ENCODE measurements at regions of chr2 and their contacts with region 1.

Region 1: GRCh38 chr2:237998530-237998929 is 31.7 kb downstream of the UBE2F start:
- DNase-seq: peak; percentile 25
- H3K4me3 Mint-ChIP-seq: peak overlapping the region; percentile 49
- H3K27ac Mint-ChIP-seq: peak overlapping the region; percentile 95
- H3K4me1 Mint-ChIP-seq: peaks cover 63% of the 10 kb centered on the region
- H3K27me3 Mint-ChIP-seq: no peaks in the 10 kb centered on the region

Region 2: DNA sequence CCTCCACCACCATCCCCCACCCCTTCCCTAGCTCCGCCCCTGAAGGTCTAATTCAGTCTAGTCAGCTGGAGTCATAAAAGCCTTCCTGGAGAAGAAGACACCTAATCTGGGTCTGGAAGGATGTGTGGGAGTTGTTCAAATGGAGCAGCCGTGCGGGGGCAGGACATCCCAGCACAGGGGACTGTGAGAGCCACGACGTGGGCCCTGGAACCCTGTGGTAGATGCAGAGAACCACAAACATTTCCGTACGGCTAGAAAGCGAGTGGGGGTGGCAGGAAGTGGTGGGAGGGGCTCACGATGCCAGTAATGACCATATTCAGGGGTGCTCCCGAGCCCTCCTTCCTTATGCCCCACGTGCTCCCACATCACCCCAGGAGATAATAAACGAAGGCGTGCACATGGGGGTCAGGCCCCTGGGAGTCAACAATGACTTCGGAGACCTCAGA is 563.6 kb before region 1 on chr2:
- intact Hi-C with region 1: loop called (anchors 5 kb)
- DNase-seq: peak; percentile 69
- H3K4me3 Mint-ChIP-seq: peak overlapping the region; percentile 72
- H3K27ac Mint-ChIP-seq: peak overlapping the region; percentile 86
- H3K4me1 Mint-ChIP-seq: peaks cover 81% of the 10 kb centered on the region
- H3K27me3 Mint-ChIP-seq: no peaks in the 10 kb centered on the region

Region 3: GRCh38 chr2:237691908-237692600 is 306.5 kb before region 1 on chr2:
- intact Hi-C with region 1: loop called (anchors 5 kb)
- DNase-seq: peak; percentile 91
- H3K4me3 Mint-ChIP-seq: peak overlapping the region; percentile 99
- H3K27ac Mint-ChIP-seq: peak overlapping the region; percentile 98
- H3K4me1 Mint-ChIP-seq: peaks cover 59% of the 10 kb centered on the region
- H3K27me3 Mint-ChIP-seq: no peaks in the 10 kb centered on the region

Region 4: GRCh38 chr2:237980751-237981150 is 17.8 kb before region 1 on chr2:
- intact Hi-C with region 1: loop called (anchors 1 kb)
- DNase-seq: peak; percentile 25
- H3K4me3 Mint-ChIP-seq: peak overlapping the region; percentile 37
- H3K27ac Mint-ChIP-seq: peak overlapping the region; percentile 94
- H3K4me1 Mint-ChIP-seq: peaks cover 72% of the 10 kb centered on the region
- H3K27me3 Mint-ChIP-seq: no peaks in the 10 kb centered on the region

Region 5: DNA sequence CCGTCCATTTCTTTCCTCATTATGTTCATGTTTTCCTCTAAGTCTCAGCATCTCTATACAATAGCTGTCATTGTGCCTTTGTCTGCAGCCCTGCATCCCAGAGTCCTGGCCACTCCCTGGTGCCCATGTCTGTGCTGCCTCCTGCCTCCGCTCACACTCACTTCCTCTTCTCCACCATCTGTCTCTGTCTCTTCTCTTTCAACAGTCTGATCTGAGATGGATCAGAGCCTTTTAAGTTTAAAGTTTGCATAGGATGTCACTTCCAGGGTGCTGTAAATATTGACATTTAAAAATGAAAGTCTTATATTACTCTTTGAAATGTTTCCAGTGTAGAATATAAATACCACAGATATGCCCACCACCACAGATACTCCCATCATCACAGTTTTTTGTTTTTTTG is 11.0 kb after region 1 on chr2:
- intact Hi-C with region 1: loop called (anchors 1 kb)
- DNase-seq: no peak
- H3K4me3 Mint-ChIP-seq: peak overlapping the region; percentile 78
- H3K27ac Mint-ChIP-seq: peak overlapping the region; percentile 99
- H3K4me1 Mint-ChIP-seq: peaks cover 59% of the 10 kb centered on the region
- H3K27me3 Mint-ChIP-seq: no peaks in the 10 kb centered on the region

Region 6: GRCh38 chr2:238024986-238025385 is 26.5 kb after region 1 on chr2:
- intact Hi-C with region 1: loop called (anchors 2 kb)
- DNase-seq: peak; percentile 33
- H3K4me3 Mint-ChIP-seq: peak overlapping the region; percentile 66
- H3K27ac Mint-ChIP-seq: peak overlapping the region; percentile 86
- H3K4me1 Mint-ChIP-seq: peaks cover 38% of the 10 kb centered on the region
- H3K27me3 Mint-ChIP-seq: no peaks in the 10 kb centered on the region

Region 7: DNA sequence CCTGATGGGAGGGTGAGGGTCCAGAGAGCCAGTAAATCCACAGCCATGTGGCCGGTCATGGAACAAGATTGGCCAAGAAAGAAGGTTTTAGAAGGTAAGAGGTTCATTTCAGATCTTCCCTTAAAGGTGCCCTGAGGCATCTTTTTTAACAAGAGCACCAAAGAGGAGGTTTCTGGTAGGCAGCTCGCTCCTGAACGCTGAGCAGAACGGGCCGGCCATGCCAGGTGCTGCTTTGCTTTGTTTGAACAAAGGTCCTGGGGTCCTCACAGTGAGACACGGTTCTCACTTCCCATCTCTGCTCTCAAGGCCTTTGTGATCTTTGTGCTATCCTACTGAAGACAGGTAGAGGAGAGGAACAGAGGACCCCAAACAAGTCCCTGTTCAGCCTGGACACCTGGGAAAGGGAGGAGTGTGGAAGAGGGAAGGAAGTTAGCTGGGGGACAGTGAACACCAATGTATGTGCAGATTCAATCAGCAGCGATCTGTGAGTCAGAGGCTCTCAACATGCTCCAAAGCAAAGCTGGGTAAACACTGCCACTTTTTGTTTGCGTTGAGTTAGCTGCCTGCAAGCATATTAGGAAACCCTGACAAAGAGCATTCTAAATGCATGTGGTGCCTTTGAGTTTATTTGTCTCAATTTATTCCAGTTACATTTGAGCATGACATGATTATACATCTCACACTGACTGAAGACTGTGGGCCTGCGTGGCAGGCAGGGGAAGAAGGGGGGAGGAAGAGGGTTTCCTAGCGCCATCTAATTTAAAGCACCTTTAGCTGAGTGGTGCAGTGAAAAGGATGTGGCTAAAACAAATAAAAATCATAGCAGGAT is 530.6 kb after region 1 on chr2:
- intact Hi-C with region 1: no loop called
- DNase-seq: no peak
- H3K4me3 Mint-ChIP-seq: no peak overlapping the region
- H3K27ac Mint-ChIP-seq: no peak overlapping the region
- H3K4me1 Mint-ChIP-seq: no peaks in the 10 kb centered on the region
- H3K27me3 Mint-ChIP-seq: no peaks in the 10 kb centered on the region